WTC11 (cell line): ENCODE measurements at regions of chr3 and their contacts with region 1.

Region 1: DNA sequence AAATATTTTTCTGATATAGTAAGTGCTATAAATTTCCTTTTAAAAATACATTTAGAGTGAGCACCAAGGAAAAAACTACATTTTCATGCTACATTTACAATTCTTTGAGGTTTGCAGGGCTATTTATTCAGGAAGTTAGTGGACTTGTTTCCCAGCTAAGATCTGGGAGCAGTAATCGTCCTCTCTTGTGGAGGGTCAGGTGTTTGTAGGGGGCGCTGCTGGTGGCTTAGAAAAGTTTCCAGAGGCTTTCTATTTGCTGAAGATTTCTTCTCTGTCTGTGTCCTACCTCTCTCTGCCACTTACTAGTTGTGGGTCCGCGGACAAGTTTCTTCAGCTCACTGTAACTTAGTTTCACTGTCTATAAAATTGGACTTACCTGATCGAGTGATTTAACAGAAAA is 163.9 kb downstream of the PEX5L start:
- DNase-seq: peak; percentile 42
- ATAC-seq: peak; percentile 93
- H3K4me3 Mint-ChIP-seq: no peak overlapping the region
- H3K27ac Mint-ChIP-seq: no peak overlapping the region
- H3K4me1 Mint-ChIP-seq: peaks cover 22% of the 10 kb centered on the region
- H3K27me3 Mint-ChIP-seq: no peaks in the 10 kb centered on the region
- CTCF ChIP-seq: no peak

Region 2: GRCh38 chr3:179801263-179801662 is 71.6 kb before region 1 on chr3:
- CTCF ChIA-PET with region 1: no interaction called
- POLR2A ChIA-PET with region 1: no interaction called
- DNase-seq: no peak
- ATAC-seq: no peak
- H3K4me3 Mint-ChIP-seq: no peak overlapping the region
- H3K27ac Mint-ChIP-seq: no peak overlapping the region
- H3K4me1 Mint-ChIP-seq: no peaks in the 10 kb centered on the region
- H3K27me3 Mint-ChIP-seq: no peaks in the 10 kb centered on the region
- CTCF ChIP-seq: no peak

Region 3: DNA sequence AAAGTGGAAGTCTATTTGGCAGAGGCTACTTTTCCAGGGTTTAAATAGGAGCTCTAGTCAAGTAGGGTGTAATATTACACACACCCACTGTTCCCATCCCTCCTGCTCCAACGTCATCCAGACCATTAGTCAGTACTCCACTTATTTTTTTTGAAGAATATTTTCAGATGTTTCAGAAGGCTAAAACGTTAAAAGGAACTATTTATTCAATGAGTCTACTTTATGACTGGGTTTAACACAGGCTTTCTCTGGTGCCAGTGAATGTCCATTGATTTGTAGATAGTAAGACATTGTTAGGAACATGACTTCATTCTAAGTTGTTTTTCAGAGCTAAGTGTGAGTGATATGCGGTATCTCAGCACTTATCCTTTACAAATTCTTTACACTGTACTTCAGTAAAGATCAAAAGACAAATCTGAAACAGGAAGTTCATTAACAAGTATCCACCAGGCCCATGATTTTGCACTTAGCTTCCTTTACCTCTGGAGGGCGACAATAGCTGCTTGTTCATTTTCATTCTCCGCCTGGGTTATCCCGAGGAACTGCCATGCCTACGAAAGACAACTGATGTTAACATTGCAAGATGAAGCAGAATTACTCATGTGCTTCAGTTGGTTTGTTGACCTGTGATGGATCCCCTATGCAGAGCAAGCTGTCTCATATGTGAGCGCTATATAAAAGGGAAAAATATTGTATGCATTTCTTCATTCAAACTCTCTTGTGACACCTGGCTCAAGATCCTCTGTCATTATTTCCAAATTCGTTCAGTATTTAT is 61.3 kb before region 1 on chr3:
- CTCF ChIA-PET with region 1: interaction called, 10 read pairs
- POLR2A ChIA-PET with region 1: no interaction called
- DNase-seq: peak; percentile 44
- ATAC-seq: peak; percentile 95
- H3K4me3 Mint-ChIP-seq: no peak overlapping the region
- H3K27ac Mint-ChIP-seq: no peak overlapping the region
- H3K4me1 Mint-ChIP-seq: peaks cover 4% of the 10 kb centered on the region
- H3K27me3 Mint-ChIP-seq: no peaks in the 10 kb centered on the region
- CTCF ChIP-seq: peak; percentile 59; the same call in 1 of the 2 replicates